Posterior vena cava (tissue), 2 donors: ENCODE measurements at regions of chr22 and their contacts with region 1.

Region 1: GRCh38 chr22:23509571-23510305 is 70.4 kb downstream of the IGLL1 start:
- DNase-seq: no peak

Region 2: DNA sequence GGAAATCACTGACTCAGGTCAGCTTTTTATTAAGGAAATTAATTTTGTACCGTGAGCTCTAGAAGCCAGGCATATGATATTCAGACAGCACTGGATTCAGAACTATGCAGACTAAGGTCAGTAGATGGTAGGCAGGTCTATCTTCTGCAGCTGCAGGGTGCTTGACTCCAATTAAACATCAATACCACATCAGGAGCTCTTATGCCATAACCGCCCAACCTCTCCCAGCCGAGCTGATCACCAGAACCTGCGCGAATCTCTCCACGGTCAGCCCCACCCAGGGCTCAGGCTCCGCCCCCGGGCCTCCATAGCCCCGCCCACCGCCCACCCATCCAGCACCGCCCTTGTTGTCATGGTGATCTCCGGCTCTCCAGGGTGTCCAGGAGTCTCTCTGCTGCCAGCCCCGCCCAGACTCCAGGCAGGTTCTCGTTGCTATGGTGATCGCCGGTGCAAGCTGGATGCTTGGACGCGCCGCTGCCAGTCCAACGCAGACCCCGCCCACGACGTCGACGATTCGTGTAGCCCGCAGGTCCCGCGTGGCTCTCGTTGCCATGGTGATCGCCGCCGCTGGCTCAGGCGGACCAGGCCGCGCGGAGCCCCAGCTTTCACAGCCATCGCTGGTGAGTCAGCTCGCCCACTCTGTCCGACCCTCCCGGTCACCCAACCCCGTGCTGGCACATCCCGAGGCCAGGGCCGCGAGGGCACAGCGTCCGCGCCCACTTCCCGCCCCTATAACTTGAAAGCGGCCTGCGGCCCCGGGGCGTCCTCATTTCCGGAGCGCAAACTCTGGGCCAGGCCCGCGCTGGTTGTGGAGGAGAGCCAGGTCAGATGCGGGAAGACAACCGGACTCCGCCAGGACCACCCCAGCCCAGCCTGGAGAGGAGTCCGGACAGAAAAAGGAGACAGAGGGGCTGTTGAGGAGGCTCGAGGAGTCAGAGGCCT is 364.5 kb before region 1 on chr22 and contains the start of gene RAB36:
- intact Hi-C with region 1: loop called in 1 of 2 experiments (anchors 5 kb)
- DNase-seq: peak; percentile 99
- total RNA-seq, gene RAB36: 4.2 to 5.1 TPM

Region 3: DNA sequence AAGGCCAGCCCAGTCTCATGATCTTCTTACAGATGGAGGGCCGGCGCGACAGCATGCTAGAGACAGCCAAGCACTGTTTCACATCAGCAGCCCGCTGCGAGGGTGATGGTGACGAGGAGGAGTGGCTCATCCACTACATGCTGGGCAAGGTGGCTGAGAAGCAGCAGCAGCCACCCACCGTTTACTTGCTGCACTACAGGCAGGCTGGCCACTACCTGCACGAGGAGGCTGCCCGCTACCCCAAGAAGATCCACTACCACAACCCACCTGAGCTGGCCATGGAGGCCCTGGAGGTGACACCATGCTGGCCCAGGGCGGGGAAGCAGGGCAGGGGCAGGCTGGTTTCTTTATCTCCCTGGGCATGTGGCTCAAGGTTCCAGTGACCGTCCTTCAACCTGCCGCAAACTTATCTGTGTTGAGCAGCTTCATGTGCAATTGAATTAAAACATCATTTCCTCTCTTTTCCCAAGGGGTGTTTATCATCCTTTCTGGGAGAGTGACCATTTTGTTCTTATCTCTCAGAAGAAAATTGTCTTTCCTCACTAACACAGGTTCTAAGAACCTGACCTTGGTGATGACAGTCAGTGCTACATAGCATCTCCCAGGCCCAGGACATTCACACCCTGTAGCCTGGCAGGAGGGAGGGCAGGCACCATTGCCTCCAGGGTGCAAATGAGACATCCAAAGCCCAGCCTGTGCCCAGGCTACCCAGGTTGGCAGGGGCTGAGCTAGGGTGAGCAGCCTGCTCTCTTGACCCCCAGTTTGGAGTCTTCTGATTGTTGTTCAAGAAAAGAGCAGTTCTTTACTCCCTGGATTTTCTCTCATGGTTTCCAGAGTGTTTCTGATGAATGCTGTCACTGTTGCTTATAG is 582.0 kb after region 1 on chr22:
- intact Hi-C with region 1: no loop called
- DNase-seq: peak; percentile 80